PC-3 (cell line): ENCODE measurements at regions of chr3 and their contacts with region 1.

Region 1: DNA sequence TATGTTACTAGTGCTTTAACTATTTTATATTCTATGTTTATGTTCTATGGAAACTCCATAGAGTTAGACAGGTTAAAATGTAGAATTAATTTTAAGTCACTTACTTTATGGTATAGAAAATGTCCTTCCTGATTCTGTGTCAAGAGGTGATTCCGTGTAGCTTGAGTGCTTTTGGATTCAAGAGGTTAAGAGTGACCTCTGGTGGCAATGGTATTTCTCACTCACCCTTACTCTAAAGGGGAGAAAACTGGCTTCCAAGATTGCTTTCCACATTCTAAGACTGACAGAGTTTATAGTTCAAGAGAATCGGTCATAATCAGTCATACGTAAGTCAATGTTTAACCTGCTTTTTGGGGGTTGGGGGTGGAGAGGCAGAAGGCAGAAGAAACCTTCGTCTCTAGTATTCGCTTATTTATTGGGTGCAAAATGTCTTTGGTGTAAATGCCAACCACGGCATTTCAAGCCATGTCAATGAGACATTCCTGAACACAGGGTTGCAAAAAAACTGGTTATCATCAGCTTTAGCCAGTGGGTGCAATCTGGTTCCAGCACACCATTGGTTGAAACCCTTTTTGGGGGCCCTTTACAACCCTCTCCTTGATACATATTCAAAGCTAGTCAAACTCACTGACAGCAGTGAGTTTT is 92.0 kb upstream of the VGLL3 start:
- DNase-seq: peak; percentile 85
- ATAC-seq: peak; percentile 97
- H3K4me3 ChIP-seq: peak overlapping the region; percentile 47
- H3K27ac ChIP-seq: no peak overlapping the region
- H3K4me1 ChIP-seq: peaks cover 9% of the 10 kb centered on the region; the same call in 1 of the 2 replicates
- H3K27me3 ChIP-seq: no peaks in the 10 kb centered on the region
- CTCF ChIP-seq: peak; percentile 91

Region 2: DNA sequence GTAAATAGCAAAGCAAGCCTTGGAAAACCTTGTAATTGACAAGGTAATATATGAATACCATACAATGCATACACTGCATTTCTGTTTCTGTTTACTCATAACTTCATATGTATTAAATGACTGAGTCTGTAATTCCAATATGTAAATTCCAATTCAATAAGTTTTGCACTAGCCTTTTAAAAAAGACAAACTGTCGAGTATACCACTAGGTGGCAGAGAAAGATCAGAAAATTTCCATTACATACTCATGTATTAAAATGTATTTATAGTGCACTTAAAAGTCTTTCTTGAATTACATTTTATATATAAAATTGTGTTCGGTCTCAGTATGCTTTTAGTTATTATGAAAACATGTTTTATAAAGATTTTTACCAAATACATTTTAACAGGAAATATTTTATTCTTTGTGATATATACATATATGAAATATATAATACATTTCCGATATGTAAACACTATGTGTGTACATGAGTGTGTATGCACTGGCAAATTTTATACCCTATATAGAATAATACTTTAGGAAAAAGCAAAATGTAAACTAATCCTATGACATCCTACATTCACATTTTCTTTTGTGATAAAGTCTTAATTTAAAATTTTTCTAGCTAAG is 308.7 kb before region 1 on chr3:
- CTCF ChIA-PET with region 1: interaction called, 5 read pairs
- POLR2A ChIA-PET with region 1: no interaction called
- intact Hi-C with region 1: loop called (anchors 1 kb)
- DNase-seq: peak; percentile 74
- ATAC-seq: peak; percentile 49; the same call in 1 of the 2 replicates
- H3K4me3 ChIP-seq: no peak overlapping the region
- H3K27ac ChIP-seq: no peak overlapping the region
- H3K4me1 ChIP-seq: no peaks in the 10 kb centered on the region
- H3K27me3 ChIP-seq: no peaks in the 10 kb centered on the region
- CTCF ChIP-seq: peak; percentile 79

Region 3: DNA sequence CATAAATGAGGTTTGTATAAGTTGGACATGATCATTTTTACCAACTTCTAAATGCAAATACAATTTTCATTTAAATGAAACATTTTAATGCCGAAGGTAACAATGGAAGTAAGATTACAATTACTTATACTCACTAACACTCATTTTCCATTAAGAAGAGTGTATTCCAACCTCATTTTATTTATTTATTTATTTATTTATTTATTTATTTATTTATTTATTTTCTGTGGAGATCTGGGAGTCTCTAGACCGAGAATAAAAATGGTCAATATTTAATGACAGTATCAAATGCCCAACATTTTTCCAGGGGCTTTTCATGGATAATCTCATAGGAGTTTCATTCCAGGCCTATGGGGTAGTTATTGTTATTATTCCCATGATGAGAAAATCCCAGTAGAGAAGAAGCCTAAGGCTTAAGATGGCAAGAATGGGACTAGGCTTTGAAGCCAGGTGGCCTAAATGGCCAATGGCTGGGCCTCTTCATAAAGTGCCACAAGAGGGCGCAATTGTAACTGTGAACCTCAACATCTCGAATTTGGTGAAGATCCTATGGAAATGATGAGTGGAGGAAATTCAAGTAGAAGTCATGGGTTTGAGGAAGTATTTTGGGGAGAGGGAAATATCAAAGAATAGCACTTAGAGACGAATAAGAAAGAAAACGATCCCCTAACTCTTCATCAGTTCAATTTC is 113.3 kb before region 1 on chr3:
- CTCF ChIA-PET with region 1: no interaction called
- POLR2A ChIA-PET with region 1: no interaction called
- intact Hi-C with region 1: loop called (anchors 1 kb)
- DNase-seq: peak; percentile 82
- ATAC-seq: peak; percentile 84
- H3K4me3 ChIP-seq: no peak overlapping the region
- H3K27ac ChIP-seq: no peak overlapping the region
- H3K4me1 ChIP-seq: no peaks in the 10 kb centered on the region
- H3K27me3 ChIP-seq: no peaks in the 10 kb centered on the region
- CTCF ChIP-seq: peak; percentile 95

Region 4: DNA sequence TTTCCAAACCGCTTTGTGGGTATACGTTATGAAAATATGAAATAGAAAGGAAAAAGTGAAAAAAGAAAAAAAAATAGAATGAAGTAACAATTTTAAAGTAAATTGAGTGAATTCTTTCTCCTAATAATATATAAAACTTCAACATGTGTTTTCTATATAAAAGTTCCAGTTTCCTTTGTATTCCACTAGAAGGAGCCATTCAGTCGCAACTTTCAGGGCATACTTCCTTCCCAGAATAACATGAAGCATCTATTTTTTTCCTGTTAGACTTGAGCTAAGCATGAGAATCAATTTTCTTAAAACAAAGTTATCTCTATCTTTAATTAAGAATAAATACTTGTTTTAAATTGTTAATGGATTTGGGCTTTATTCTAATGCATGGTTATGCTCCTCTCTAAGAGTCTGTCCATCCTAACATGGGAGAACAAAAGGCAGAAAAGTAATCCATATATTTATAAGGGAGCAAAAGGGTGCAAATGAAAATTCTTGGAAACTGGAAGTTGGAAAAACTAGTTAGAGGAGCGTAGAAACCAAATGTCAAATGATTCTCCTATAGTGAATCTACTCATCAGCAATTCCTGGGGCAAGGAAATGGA is 76.0 kb before region 1 on chr3:
- CTCF ChIA-PET with region 1: interaction called, 12 read pairs
- POLR2A ChIA-PET with region 1: no interaction called
- intact Hi-C with region 1: loop called (anchors 1 kb)
- DNase-seq: peak; percentile 51
- ATAC-seq: peak; percentile 49; the same call in 1 of the 2 replicates
- H3K4me3 ChIP-seq: no peak overlapping the region
- H3K27ac ChIP-seq: no peak overlapping the region
- H3K4me1 ChIP-seq: no peaks in the 10 kb centered on the region
- H3K27me3 ChIP-seq: no peaks in the 10 kb centered on the region
- CTCF ChIP-seq: peak; percentile 81

Region 5: GRCh38 chr3:87069960-87070359 is 13.0 kb before region 1 on chr3:
- CTCF ChIA-PET with region 1: no interaction called
- POLR2A ChIA-PET with region 1: no interaction called
- intact Hi-C with region 1: no loop called
- DNase-seq: no peak
- ATAC-seq: no peak
- H3K4me3 ChIP-seq: no peak overlapping the region
- H3K27ac ChIP-seq: no peak overlapping the region
- H3K4me1 ChIP-seq: no peaks in the 10 kb centered on the region
- H3K27me3 ChIP-seq: no peaks in the 10 kb centered on the region
- CTCF ChIP-seq: no peak

Region 6: DNA sequence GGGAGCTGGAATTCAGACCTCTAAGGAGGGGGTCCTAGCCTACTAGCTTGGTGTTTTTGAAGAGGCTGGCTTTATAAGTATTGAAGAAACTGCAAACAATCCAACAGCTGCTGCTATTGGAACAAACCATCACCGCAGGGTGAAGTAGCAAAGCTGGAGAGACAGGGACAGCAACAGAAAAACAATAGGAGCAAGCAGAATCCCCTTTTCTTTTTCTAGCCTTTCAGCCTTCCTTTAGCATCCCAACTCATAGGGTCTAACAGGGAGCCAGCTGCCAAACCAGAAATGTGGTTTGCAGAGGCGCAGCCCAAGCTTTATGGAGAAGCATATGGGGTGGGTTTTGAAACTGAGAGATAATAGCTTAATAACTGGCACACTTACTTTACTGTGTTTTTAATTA is 38.0 kb after region 1 on chr3:
- CTCF ChIA-PET with region 1: no interaction called
- POLR2A ChIA-PET with region 1: no interaction called
- intact Hi-C with region 1: loop called (anchors 2 kb)
- DNase-seq: no peak
- ATAC-seq: peak; percentile 8; the same call in 1 of the 2 replicates
- H3K4me3 ChIP-seq: 0 out of 2 replicates have a peak overlapping the region, but pooled peaks have one; percentile 14
- H3K27ac ChIP-seq: peak overlapping the region; percentile 59
- H3K4me1 ChIP-seq: peaks cover 16% of the 10 kb centered on the region
- H3K27me3 ChIP-seq: no peaks in the 10 kb centered on the region
- CTCF ChIP-seq: no peak

Region 7: GRCh38 chr3:87607234-87607633 is 524.3 kb after region 1 on chr3:
- CTCF ChIA-PET with region 1: no interaction called
- POLR2A ChIA-PET with region 1: no interaction called
- intact Hi-C with region 1: no loop called
- DNase-seq: no peak
- ATAC-seq: no peak
- H3K4me3 ChIP-seq: no peak overlapping the region
- H3K27ac ChIP-seq: no peak overlapping the region
- H3K4me1 ChIP-seq: no peaks in the 10 kb centered on the region
- H3K27me3 ChIP-seq: no peaks in the 10 kb centered on the region
- CTCF ChIP-seq: no peak